Activated CD4-positive, alpha-beta memory T cell treated with anti-CD3 and anti-CD28 coated beads for 36 hours (primary cell): ENCODE measurements at regions of chr1 and their contacts with region 1.

Region 1: DNA sequence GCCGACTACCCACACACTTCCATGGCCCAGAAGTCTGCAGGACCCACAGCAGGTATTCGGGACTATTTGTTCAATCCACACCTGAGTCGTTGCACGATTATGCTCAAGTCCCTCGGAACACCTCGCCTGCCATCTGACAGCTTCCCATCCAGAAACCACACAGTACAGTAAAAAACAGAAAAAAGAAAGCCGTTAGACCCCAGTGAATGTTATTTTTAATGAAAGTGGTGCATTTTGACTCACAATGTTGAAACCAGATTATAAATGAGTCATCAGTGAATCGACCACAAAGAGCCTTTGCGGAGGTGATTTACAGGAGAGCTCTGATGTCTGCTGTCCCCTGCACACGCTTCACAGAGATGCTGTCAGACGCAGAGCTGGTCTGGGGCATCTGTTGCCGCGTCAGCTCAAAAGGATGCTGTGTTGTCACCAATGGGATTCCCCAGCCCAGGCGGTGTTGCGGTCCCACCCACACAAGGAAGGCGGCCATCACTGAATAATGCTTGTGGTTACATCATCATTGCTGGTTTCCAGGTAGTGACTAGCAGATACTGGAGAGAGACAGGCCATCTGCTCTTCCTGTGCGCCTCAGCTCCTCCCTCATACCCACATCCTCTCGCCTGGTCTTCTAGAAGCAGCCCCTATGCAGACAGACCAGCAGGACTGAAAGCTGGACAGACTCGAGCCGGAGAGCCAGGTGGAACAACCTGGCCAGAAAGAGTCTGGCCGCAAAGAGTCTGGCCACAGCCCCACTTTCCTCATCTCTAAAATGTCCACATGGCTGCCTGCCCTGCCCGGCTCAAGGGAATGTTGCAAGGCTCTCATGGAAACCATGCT is 116.8 kb downstream of the TOMM20 start:
- DNase-seq: peak; percentile 99
- H3K4me3 Mint-ChIP-seq: peak overlapping the region; percentile 56
- H3K27ac Mint-ChIP-seq: peak overlapping the region; percentile 97
- H3K4me1 Mint-ChIP-seq: peaks cover 90% of the 10 kb centered on the region
- H3K27me3 Mint-ChIP-seq: peaks cover 2% of the 10 kb centered on the region

Region 2: GRCh38 chr1:234509452-234510328 is 502.1 kb before region 1 on chr1:
- CTCF ChIA-PET with region 1: no interaction called
- POLR2A ChIA-PET with region 1: no interaction called
- intact Hi-C with region 1: no loop called
- DNase-seq: no peak
- H3K4me3 Mint-ChIP-seq: no peak overlapping the region
- H3K27ac Mint-ChIP-seq: no peak overlapping the region
- H3K4me1 Mint-ChIP-seq: peaks cover 13% of the 10 kb centered on the region
- H3K27me3 Mint-ChIP-seq: no peaks in the 10 kb centered on the region

Region 3: DNA sequence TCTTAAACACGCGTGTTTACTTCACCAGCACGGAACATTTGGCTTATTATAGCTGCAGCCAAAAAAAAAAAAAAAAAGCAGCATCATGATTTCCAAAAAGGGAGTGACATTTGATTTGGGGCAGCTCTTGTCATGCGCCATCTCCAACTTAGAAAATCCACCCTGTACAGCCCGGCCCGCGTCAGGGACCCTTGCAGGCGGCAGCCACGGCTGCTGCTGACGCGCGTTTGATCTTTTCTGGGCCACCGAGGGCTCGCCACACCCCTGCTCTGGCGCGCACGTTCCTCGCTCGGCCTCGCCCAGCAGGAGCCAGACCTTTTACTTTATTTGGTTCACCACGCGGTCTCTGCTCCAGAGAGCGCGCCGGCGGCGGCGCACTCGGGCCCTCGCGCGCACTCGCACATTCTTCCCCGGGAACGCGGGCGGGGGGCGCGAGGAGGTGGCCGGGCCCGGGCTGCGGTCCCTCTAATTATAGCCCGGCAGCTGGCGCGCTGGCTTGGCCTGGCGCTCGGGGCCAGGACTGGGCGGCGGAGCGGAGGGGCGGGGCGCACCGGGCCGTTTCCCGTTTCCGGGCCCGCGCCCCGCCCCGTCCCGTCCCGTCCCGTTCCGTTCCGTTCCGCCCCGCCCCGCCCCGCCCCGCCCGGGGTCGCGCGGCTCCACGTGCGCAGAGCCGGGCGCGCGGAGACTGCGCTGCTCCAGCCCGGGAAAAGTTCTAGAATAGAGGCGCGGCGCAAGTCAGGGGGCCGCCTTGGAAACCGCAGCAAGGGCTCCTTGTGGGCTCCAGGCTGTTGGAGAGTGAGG is 412.0 kb before region 1 on chr1:
- CTCF ChIA-PET with region 1: interaction called, 6 read pairs
- POLR2A ChIA-PET with region 1: interaction called, 6 read pairs
- intact Hi-C with region 1: loop called (anchors 2 kb)
- DNase-seq: peak; percentile 82
- H3K4me3 Mint-ChIP-seq: peak overlapping the region; percentile 85
- H3K27ac Mint-ChIP-seq: peak overlapping the region; percentile 100
- H3K4me1 Mint-ChIP-seq: peaks cover 54% of the 10 kb centered on the region
- H3K27me3 Mint-ChIP-seq: no peaks in the 10 kb centered on the region

Region 4: GRCh38 chr1:234772345-234773147 is 239.3 kb before region 1 on chr1:
- CTCF ChIA-PET with region 1: no interaction called
- POLR2A ChIA-PET with region 1: interaction called, 4 read pairs
- intact Hi-C with region 1: loop called (anchors 2 kb)
- DNase-seq: peak; percentile 95
- H3K4me3 Mint-ChIP-seq: peak overlapping the region; percentile 49
- H3K27ac Mint-ChIP-seq: peak overlapping the region; percentile 84
- H3K4me1 Mint-ChIP-seq: peaks cover 54% of the 10 kb centered on the region
- H3K27me3 Mint-ChIP-seq: no peaks in the 10 kb centered on the region

Region 5: GRCh38 chr1:234925440-234926263 is 86.2 kb before region 1 on chr1:
- CTCF ChIA-PET with region 1: interaction called, 4 read pairs
- POLR2A ChIA-PET with region 1: interaction called, 18 read pairs
- intact Hi-C with region 1: loop called (anchors 1 kb)
- DNase-seq: peak; percentile 46
- H3K4me3 Mint-ChIP-seq: peak overlapping the region; percentile 66
- H3K27ac Mint-ChIP-seq: peak overlapping the region; percentile 98
- H3K4me1 Mint-ChIP-seq: peaks cover 54% of the 10 kb centered on the region
- H3K27me3 Mint-ChIP-seq: no peaks in the 10 kb centered on the region

Region 6: DNA sequence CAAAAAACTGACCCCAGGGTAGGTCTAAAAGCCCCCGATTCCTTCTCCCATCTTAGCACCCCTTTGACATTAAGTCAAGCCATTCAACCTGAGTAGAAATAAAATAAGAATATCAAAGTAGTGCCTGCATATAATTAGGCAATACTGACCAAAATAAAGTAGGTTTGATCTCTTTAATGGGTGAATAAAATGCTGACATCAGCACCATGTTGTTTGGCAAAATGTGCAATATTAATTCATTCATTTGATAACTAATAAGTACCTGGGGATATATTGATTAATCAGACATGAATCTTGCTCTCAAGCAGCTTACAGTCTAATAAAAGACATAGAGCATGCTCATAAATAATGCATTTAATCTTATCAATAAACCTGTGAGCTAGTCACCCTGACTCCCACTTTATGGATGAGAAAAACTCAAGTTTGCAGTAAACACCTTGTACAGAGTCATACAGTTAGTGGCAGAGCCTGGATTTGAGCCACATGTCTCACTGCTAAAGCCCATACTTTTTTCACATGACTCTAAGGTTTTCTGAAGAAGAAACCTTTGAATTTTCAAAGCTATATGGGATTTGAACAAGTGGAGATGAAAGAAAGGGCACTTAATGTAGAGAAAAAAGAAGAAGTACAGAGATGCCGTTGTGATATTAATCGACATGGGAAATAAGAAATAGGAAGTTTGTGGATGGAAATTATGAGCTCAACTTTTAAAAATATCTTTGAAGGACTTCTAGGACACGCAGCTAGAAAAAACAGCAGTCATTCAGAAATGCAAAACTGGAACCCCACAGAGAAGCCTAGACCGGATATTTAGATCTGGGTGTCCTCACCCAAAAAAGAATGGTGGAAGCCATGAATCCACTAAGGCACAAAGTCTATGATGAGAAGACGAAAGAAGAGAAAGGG is 67.1 kb before region 1 on chr1:
- CTCF ChIA-PET with region 1: no interaction called
- POLR2A ChIA-PET with region 1: no interaction called
- intact Hi-C with region 1: no loop called
- DNase-seq: peak; percentile 8
- H3K4me3 Mint-ChIP-seq: no peak overlapping the region
- H3K27ac Mint-ChIP-seq: peak overlapping the region; percentile 71
- H3K4me1 Mint-ChIP-seq: peaks cover 19% of the 10 kb centered on the region
- H3K27me3 Mint-ChIP-seq: no peaks in the 10 kb centered on the region

Region 7: GRCh38 chr1:234970731-234971476 is 40.9 kb before region 1 on chr1:
- CTCF ChIA-PET with region 1: interaction called, 4 read pairs
- POLR2A ChIA-PET with region 1: interaction called, 19 read pairs
- intact Hi-C with region 1: loop called (anchors 1 kb)
- DNase-seq: peak; percentile 70
- H3K4me3 Mint-ChIP-seq: peak overlapping the region; percentile 30
- H3K27ac Mint-ChIP-seq: peak overlapping the region; percentile 83
- H3K4me1 Mint-ChIP-seq: peaks cover 67% of the 10 kb centered on the region
- H3K27me3 Mint-ChIP-seq: no peaks in the 10 kb centered on the region

Region 8: DNA sequence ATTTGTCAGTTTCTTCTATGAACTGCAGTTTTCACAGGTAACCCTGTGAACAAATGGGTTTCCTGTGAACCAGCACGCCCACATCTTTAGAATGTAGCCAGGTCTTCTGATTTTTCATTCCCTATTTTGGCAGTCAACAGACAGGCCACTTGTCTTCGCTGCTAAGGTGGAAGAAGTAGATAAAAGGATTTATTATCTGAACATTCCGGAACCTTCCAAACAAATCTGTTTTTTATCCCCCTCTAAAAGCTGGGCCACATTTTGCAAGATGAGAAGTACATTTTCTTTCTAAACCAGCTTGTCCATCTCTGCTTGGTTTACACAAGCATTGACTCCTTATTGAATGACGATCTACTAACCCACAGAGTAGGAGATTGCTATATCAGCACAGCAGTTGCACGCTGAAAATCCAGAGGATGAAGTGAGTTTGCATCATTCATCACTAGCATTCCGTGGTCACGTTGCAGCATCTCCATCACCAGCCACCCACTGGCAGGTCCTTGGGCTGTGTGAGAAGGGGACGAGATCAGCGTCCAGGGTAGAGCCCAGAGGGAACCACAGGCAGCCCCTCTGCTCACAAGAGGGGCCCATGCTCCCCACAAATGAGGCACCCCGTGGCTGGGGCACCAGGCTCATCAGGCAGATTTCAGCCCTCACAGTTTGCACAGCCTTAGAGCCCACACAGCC is 33.4 kb after region 1 on chr1:
- CTCF ChIA-PET with region 1: interaction called, 4 read pairs
- POLR2A ChIA-PET with region 1: interaction called, 20 read pairs
- intact Hi-C with region 1: loop called (anchors 1 kb)
- DNase-seq: peak; percentile 70
- H3K4me3 Mint-ChIP-seq: no peak overlapping the region
- H3K27ac Mint-ChIP-seq: peak overlapping the region; percentile 91
- H3K4me1 Mint-ChIP-seq: peaks cover 59% of the 10 kb centered on the region
- H3K27me3 Mint-ChIP-seq: no peaks in the 10 kb centered on the region